ENCODE measurements at regions of chr10 and their contacts with region 1.

Region 1: GRCh38 chr10:58384999-58385783 is at the start of gene TFAM:
- DNase-seq: peak; percentile 92 to 98 (median 96)
- ATAC-seq: peak; percentile 83
- H3K4me3 ChIP-seq: peak within 1 kb of the TSS; percentile 87
- H3K4me3 Mint-ChIP-seq: peak within 1 kb of the TSS; percentile 98
- H3K27ac ChIP-seq: peak within 1 kb of the TSS; percentile 69 to 79
- H3K27ac Mint-ChIP-seq: peak within 1 kb of the TSS; percentile 96
- H3K4me1 ChIP-seq: peaks cover 21% of the 10 kb centered on the region
- H3K4me1 Mint-ChIP-seq: peaks cover 66% of the 10 kb centered on the region
- H3K27me3 ChIP-seq: no peaks in the 10 kb centered on the region
- H3K27me3 Mint-ChIP-seq: no peaks in the 10 kb centered on the region
- CTCF ChIP-seq: peak; percentile 64
- total RNA-seq, gene TFAM: 43.7 to 50.5 TPM

Region 2: GRCh38 chr10:57992321-57993077 is 392.7 kb before region 1 on chr10:
- CTCF ChIA-PET with region 1: no interaction called
- POLR2A ChIA-PET with region 1: no interaction called
- intact Hi-C with region 1: no loop called
- DNase-seq: no peak
- ATAC-seq: no peak
- H3K4me3 ChIP-seq: no peak overlapping the region
- H3K4me3 Mint-ChIP-seq: no peak overlapping the region
- H3K27ac ChIP-seq: no peak overlapping the region
- H3K27ac Mint-ChIP-seq: no peak overlapping the region
- H3K4me1 ChIP-seq: no peaks in the 10 kb centered on the region
- H3K4me1 Mint-ChIP-seq: no peaks in the 10 kb centered on the region
- H3K27me3 ChIP-seq: no peaks in the 10 kb centered on the region
- H3K27me3 Mint-ChIP-seq: no peaks in the 10 kb centered on the region
- CTCF ChIP-seq: no peak

Region 3: GRCh38 chr10:58023341-58024073 is 361.7 kb before region 1 on chr10:
- CTCF ChIA-PET with region 1: no interaction called
- POLR2A ChIA-PET with region 1: no interaction called
- intact Hi-C with region 1: no loop called
- DNase-seq: no peak
- ATAC-seq: no peak
- H3K4me3 ChIP-seq: no peak overlapping the region
- H3K4me3 Mint-ChIP-seq: no peak overlapping the region
- H3K27ac ChIP-seq: no peak overlapping the region
- H3K27ac Mint-ChIP-seq: no peak overlapping the region
- H3K4me1 ChIP-seq: no peaks in the 10 kb centered on the region
- H3K4me1 Mint-ChIP-seq: no peaks in the 10 kb centered on the region
- H3K27me3 ChIP-seq: no peaks in the 10 kb centered on the region
- H3K27me3 Mint-ChIP-seq: no peaks in the 10 kb centered on the region
- CTCF ChIP-seq: no peak

Region 4: GRCh38 chr10:58177362-58177947 is 207.7 kb before region 1 on chr10:
- CTCF ChIA-PET with region 1: no interaction called
- POLR2A ChIA-PET with region 1: no interaction called
- intact Hi-C with region 1: loop called in 1 of 2 experiments (anchors 5 kb)
- DNase-seq: peak in 3 of 14 experiments; percentile 21 to 43 (median 27)
- ATAC-seq: no peak
- H3K4me3 ChIP-seq: no peak overlapping the region
- H3K4me3 Mint-ChIP-seq: no peak overlapping the region
- H3K27ac ChIP-seq: no peak overlapping the region
- H3K27ac Mint-ChIP-seq: no peak overlapping the region
- H3K4me1 ChIP-seq: no peaks in the 10 kb centered on the region
- H3K4me1 Mint-ChIP-seq: no peaks in the 10 kb centered on the region
- H3K27me3 ChIP-seq: no peaks in the 10 kb centered on the region
- H3K27me3 Mint-ChIP-seq: peaks cover 14% of the 10 kb centered on the region
- CTCF ChIP-seq: peak; percentile 72

Region 5: GRCh38 chr10:58268870-58269605 is 116.2 kb before region 1 on chr10 and contains the start of gene CISD1:
- CTCF ChIA-PET with region 1: interaction called, 7 read pairs
- POLR2A ChIA-PET with region 1: interaction called, 78 read pairs
- intact Hi-C with region 1: loop called (anchors 1 to 2 kb)
- DNase-seq: peak; percentile 87 to 100 (median 92)
- ATAC-seq: peak; percentile 63
- H3K4me3 ChIP-seq: peak within 1 kb of the TSS; percentile 81
- H3K4me3 Mint-ChIP-seq: peak within 1 kb of the TSS; percentile 96
- H3K27ac ChIP-seq: peak within 1 kb of the TSS; percentile 81 to 87
- H3K27ac Mint-ChIP-seq: peak within 1 kb of the TSS; percentile 91
- H3K4me1 ChIP-seq: peaks cover 22% of the 10 kb centered on the region
- H3K4me1 Mint-ChIP-seq: peaks cover 41% of the 10 kb centered on the region
- H3K27me3 ChIP-seq: no peaks in the 10 kb centered on the region
- H3K27me3 Mint-ChIP-seq: no peaks in the 10 kb centered on the region
- CTCF ChIP-seq: no peak
- total RNA-seq, gene CISD1: 1.5 to 2.0 TPM

Region 6: GRCh38 chr10:58299580-58299979 is 85.6 kb before region 1 on chr10:
- CTCF ChIA-PET with region 1: interaction called, 32 read pairs
- POLR2A ChIA-PET with region 1: interaction called, 13 read pairs
- intact Hi-C with region 1: loop called (anchors 1 kb)
- DNase-seq: peak; percentile 24 to 81 (median 49)
- ATAC-seq: peak; percentile 86
- H3K4me3 ChIP-seq: no peak overlapping the region
- H3K4me3 Mint-ChIP-seq: no peak overlapping the region
- H3K27ac ChIP-seq: no peak overlapping the region
- H3K27ac Mint-ChIP-seq: no peak overlapping the region
- H3K4me1 ChIP-seq: no peaks in the 10 kb centered on the region
- H3K4me1 Mint-ChIP-seq: peaks cover 3% of the 10 kb centered on the region
- H3K27me3 ChIP-seq: no peaks in the 10 kb centered on the region
- H3K27me3 Mint-ChIP-seq: peaks cover 8% of the 10 kb centered on the region
- CTCF ChIP-seq: peak; percentile 95

Region 7: GRCh38 chr10:58334817-58335305 is 50.3 kb before region 1 on chr10 and contains the start of gene UBE2D1:
- CTCF ChIA-PET with region 1: interaction called, 3 read pairs
- POLR2A ChIA-PET with region 1: interaction called, 32 read pairs
- intact Hi-C with region 1: loop called (anchors 1 to 2 kb)
- DNase-seq: peak; percentile 65 to 87 (median 80)
- ATAC-seq: peak; percentile 98
- H3K4me3 ChIP-seq: peak within 1 kb of the TSS; percentile 79
- H3K4me3 Mint-ChIP-seq: peak within 1 kb of the TSS; percentile 92
- H3K27ac ChIP-seq: no peak within 1 kb of the TSS
- H3K27ac Mint-ChIP-seq: peak within 1 kb of the TSS; percentile 50
- H3K4me1 ChIP-seq: peaks cover 12% of the 10 kb centered on the region
- H3K4me1 Mint-ChIP-seq: peaks cover 45% of the 10 kb centered on the region
- H3K27me3 ChIP-seq: no peaks in the 10 kb centered on the region
- H3K27me3 Mint-ChIP-seq: peaks cover 6% of the 10 kb centered on the region
- CTCF ChIP-seq: no peak
- total RNA-seq, gene UBE2D1: 6.0 to 7.8 TPM

Region 8: DNA sequence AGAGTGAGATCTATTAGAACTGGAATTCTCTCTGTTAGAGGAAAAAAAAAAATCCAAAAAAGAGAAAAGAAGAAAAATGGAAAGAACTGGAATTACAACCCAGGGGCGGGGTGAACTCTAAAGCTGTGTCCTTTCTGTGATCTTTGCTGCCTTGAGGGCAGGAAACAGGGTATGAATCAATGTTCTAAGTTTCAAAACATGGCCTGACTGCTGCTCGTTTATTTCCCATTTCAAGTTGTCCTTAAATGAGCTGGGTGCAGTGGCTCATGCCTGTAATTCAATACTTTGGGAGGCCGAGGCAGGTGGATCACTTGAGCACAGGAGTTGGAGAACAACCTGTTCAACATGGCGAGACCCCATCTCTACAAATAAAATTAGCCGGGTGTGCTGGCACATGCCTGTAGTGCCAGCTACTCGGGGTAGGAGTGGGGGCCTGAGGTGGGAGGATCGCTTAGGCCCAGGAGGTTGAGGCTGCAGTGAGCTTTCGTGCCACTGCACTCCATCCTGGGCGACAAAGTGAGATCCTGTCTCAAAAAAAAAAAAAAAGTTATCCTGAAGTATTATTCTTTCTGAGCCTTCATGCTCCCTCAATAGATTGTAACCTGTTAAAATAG is 24.7 kb before region 1 on chr10:
- CTCF ChIA-PET with region 1: no interaction called
- POLR2A ChIA-PET with region 1: interaction called, 10 read pairs
- intact Hi-C with region 1: no loop called
- DNase-seq: no peak
- ATAC-seq: no peak
- H3K4me3 ChIP-seq: no peak overlapping the region
- H3K4me3 Mint-ChIP-seq: no peak overlapping the region
- H3K27ac ChIP-seq: no peak overlapping the region
- H3K27ac Mint-ChIP-seq: peak overlapping the region; percentile 0
- H3K4me1 ChIP-seq: peaks cover 8% of the 10 kb centered on the region
- H3K4me1 Mint-ChIP-seq: peaks cover 45% of the 10 kb centered on the region
- H3K27me3 ChIP-seq: no peaks in the 10 kb centered on the region
- H3K27me3 Mint-ChIP-seq: no peaks in the 10 kb centered on the region
- CTCF ChIP-seq: no peak

Region 9: GRCh38 chr10:58457761-58458616 is 72.8 kb after region 1 on chr10:
- CTCF ChIA-PET with region 1: no interaction called
- POLR2A ChIA-PET with region 1: no interaction called
- intact Hi-C with region 1: no loop called
- DNase-seq: no peak
- ATAC-seq: no peak
- H3K4me3 ChIP-seq: no peak overlapping the region
- H3K4me3 Mint-ChIP-seq: no peak overlapping the region
- H3K27ac ChIP-seq: no peak overlapping the region
- H3K27ac Mint-ChIP-seq: no peak overlapping the region
- H3K4me1 ChIP-seq: no peaks in the 10 kb centered on the region
- H3K4me1 Mint-ChIP-seq: no peaks in the 10 kb centered on the region
- H3K27me3 ChIP-seq: no peaks in the 10 kb centered on the region
- H3K27me3 Mint-ChIP-seq: peaks cover 13% of the 10 kb centered on the region
- CTCF ChIP-seq: no peak

Region 10: GRCh38 chr10:58473976-58474375 is 88.8 kb after region 1 on chr10:
- CTCF ChIA-PET with region 1: no interaction called
- POLR2A ChIA-PET with region 1: no interaction called
- intact Hi-C with region 1: no loop called
- DNase-seq: no peak
- ATAC-seq: no peak
- H3K4me3 ChIP-seq: no peak overlapping the region
- H3K4me3 Mint-ChIP-seq: no peak overlapping the region
- H3K27ac ChIP-seq: no peak overlapping the region
- H3K27ac Mint-ChIP-seq: no peak overlapping the region
- H3K4me1 ChIP-seq: no peaks in the 10 kb centered on the region
- H3K4me1 Mint-ChIP-seq: no peaks in the 10 kb centered on the region
- H3K27me3 ChIP-seq: peaks cover 2 to 5% of the 10 kb centered on the region in 2 experiments
- H3K27me3 Mint-ChIP-seq: peaks cover 51% of the 10 kb centered on the region
- CTCF ChIP-seq: no peak

Measured in CD4-positive, alpha-beta T cell (primary cell).